Prostate gland (tissue), 2 donors: ENCODE measurements at regions of chr2 and their contacts with region 1.

Region 1: DNA sequence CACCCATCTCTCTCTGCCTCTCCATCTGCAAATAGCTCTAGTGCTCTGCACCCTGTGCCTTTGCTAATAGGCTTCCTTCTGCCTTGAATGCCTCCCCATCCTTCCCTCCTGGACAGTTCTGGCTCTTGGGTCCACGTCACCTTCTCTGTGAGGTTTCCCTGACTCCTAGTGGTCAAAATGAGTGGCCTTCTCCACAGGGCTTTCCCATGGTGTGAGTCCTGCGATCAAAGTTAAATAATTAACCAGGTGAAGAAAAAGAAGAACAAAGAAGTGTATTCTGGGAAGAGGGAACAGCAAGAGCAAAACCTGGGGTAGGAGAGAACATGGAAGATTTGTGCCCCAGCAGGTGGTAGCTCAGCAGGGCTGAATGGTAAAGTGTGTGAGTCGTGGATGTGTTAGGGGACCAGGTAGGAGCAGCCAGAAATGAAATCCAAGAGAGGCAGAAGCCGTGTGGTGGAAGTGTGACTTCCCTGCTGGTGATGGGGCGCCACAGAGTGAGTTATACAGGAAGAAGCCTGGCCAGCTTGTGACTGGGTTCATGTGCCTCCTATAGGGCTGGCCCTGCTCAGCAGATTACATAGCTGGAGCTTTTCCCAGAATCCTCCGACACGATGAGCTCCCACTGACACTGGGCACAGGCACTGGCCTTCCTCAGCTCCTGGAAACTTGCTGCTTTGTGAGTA is 93.8 kb upstream of the LDAH start:
- DNase-seq: peak; percentile 31
- H3K4me3 ChIP-seq: no peak overlapping the region
- H3K27ac ChIP-seq: peak overlapping the region; percentile 26 to 60
- H3K4me1 ChIP-seq: peaks cover 9% of the 10 kb centered on the region
- H3K27me3 ChIP-seq: no peaks in the 10 kb centered on the region
- CTCF ChIP-seq: peak in 3 of 4 experiments; percentile 35 to 48 (median 46)
- POLR2A ChIP-seq: no peak

Region 2: DNA sequence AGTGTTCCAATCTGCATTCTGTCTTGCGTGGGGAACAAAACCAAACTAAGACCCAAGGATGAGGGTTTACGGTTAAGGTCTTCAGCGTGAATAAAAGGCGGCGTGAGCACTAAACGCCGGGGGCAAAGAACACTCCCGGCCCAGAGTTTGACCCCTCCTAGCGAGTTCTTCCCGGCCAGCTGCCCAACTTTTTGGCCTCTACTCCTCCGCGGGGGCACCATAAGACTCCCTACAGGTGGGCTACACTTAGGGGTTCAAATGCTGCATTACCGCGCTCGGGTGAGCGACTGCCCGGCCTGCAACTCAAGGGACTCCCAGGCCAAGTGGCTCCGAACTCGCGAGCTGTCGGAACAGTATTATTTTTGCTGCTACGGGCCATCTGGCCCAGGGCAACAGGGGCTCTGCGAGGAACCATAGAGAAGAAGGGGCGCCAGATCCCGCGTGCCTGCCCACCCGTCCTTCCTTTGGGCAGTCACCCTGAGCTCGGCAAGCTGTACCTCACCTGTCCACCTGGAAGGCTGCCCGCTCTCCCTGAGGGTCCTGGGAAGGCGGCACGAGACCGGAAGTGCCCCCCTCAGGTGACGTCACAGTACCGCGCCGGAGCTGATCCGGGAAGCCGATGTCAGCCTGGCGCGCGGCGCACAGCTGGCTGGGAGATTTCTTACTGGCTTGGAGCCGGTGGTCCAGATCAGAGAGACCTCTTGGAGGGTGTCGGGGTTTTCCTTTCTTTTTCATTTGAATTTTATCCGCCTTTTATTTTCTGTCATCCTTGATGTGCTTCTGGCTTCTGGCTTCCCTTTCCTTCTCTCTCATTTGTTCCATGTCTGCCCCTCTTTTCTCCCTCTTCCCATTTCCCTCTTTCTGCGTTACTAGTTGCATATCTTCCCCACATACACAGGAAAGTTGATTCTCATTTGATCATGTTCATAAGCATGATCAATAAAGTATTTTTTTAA is 93.9 kb before region 1 on chr2 and contains the start of gene LDAH:
- intact Hi-C with region 1: loop called (anchors 10 kb)
- DNase-seq: peak; percentile 86
- H3K4me3 ChIP-seq: peak within 1 kb of the TSS; percentile 49 to 57
- H3K27ac ChIP-seq: peak within 1 kb of the TSS; percentile 83 to 91
- H3K4me1 ChIP-seq: no peaks in the 10 kb centered on the region
- H3K27me3 ChIP-seq: no peaks in the 10 kb centered on the region
- CTCF ChIP-seq: no peak
- POLR2A ChIP-seq: peak; percentile 42
- total RNA-seq, gene LDAH: 6.6 to 17.3 TPM